ENCODE measurements at regions of chr10 and their contacts with region 1.

Region 1: DNA sequence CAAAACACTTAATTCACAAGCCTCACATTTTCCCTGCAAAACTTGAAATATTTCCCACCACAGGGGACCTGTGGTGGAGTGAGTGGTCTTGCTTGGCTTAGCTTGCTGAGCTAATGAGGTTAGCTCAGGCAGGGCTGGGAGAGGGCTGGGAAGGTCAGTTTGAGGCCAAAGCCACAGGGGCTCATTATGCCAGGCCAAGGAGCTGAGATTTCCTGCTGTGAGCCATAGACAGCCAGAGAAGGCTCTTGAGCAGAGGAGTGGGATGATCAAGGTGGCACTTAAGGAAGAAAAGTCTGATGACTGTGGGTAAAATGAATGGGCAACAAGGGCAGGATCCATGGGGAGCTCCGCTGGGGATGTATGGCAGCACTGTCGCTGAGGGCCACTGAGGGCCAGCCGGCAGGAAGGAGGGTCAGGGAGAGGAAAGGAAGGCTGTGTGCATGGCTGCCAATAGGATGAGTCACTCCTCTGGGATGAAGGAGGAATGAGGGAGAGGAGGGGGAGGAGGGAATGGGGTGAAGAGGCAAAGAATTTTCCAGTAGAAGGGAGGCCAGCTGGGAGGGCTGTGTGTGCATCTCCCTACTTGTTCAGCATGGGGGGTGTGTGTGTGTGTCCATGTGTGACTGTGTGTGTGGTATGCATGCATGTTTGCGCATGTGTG is 18.7 kb upstream of the ZNF488 start:
- DNase-seq: peak; percentile 87
- H3K4me3 ChIP-seq: no peak overlapping the region
- H3K27ac ChIP-seq: peak overlapping the region; percentile 45
- H3K4me1 ChIP-seq: peaks cover 18% of the 10 kb centered on the region
- H3K27me3 ChIP-seq: peaks cover 0 to 2% of the 10 kb centered on the region in 2 experiments
- CTCF ChIP-seq: no peak
- POLR2A ChIP-seq: peak; percentile 26

Region 2: GRCh38 chr10:45453639-45454255 is 1949.0 kb before region 1 on chr10:
- CTCF ChIA-PET with region 1: no interaction called
- POLR2A ChIA-PET with region 1: no interaction called
- dilution Hi-C with region 1: no loop called
- intact Hi-C with region 1: no loop called
- DNase-seq: no peak
- H3K4me3 ChIP-seq: no peak overlapping the region
- H3K27ac ChIP-seq: no peak overlapping the region
- H3K4me1 ChIP-seq: no peaks in the 10 kb centered on the region
- H3K27me3 ChIP-seq: no peaks in the 10 kb centered on the region
- CTCF ChIP-seq: no peak
- POLR2A ChIP-seq: no peak

Region 3: GRCh38 chr10:47146572-47146971 is 256.2 kb before region 1 on chr10:
- CTCF ChIA-PET with region 1: no interaction called
- POLR2A ChIA-PET with region 1: no interaction called
- dilution Hi-C with region 1: no loop called
- intact Hi-C with region 1: no loop called
- DNase-seq: no peak
- H3K4me3 ChIP-seq: no peak overlapping the region
- H3K27ac ChIP-seq: no peak overlapping the region
- H3K4me1 ChIP-seq: no peaks in the 10 kb centered on the region
- H3K27me3 ChIP-seq: no peaks in the 10 kb centered on the region
- CTCF ChIP-seq: no peak
- POLR2A ChIP-seq: no peak

Region 4: GRCh38 chr10:47412869-47413268 is 10.1 kb after region 1 on chr10:
- CTCF ChIA-PET with region 1: interaction called, 6 read pairs
- POLR2A ChIA-PET with region 1: no interaction called
- dilution Hi-C with region 1: no loop called
- intact Hi-C with region 1: loop called (anchors 1 kb)
- DNase-seq: peak; percentile 73
- H3K4me3 ChIP-seq: no peak overlapping the region
- H3K27ac ChIP-seq: no peak overlapping the region
- H3K4me1 ChIP-seq: peaks cover 15% of the 10 kb centered on the region
- H3K27me3 ChIP-seq: no peaks in the 10 kb centered on the region
- CTCF ChIP-seq: no peak
- POLR2A ChIP-seq: no peak

Measured in endothelial cell of umbilical vein (primary cell).